ENCODE measurements at regions of chrX and their contacts with region 1.

Region 1: GRCh38 chrX:141278302-141278701 is 36.0 kb upstream of the SPANXC start:
- DNase-seq: no peak
- ATAC-seq: peak; percentile 60; the same call in 1 of the 2 replicates
- H3K4me3 ChIP-seq: no peak overlapping the region
- H3K27ac ChIP-seq: no peak overlapping the region
- H3K4me1 ChIP-seq: no peaks in the 10 kb centered on the region
- H3K27me3 ChIP-seq: no peaks in the 10 kb centered on the region
- CTCF ChIP-seq: peak; percentile 76

Region 2: DNA sequence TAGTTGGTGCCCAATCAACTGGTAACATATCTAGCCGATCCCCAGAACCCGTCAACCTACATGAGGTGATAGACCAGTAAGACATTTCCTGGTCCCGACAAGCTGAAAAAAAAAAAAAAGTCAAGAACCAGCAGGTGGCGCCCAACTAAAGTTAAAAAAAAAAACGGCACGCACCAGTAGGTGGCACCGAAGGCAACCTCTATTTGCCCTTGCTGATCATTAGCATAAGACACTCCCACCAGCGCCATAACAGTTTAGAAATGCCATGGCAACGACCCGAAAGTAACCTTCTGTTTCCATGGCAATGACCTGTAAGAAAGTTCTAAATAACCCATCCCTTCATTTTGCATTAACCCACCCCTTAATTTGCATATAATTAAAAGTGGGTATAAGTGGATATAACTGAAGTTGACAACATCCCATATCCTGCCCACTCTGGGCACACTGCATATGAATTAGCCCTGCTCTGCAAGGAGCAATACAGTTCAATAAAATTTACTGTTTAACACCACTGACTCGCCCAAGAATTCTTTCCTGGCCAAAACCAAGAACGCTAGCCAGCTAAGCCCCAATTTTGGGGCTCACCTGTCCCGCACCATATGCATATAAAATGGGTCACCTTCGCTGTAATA is 359.8 kb before region 1 on chrX:
- CTCF ChIA-PET with region 1: no interaction called
- POLR2A ChIA-PET with region 1: no interaction called
- in situ Hi-C with region 1: no loop called
- intact Hi-C with region 1: loop called (anchors 5 kb)
- DNase-seq: peak; percentile 17
- ATAC-seq: peak; percentile 72
- H3K4me3 ChIP-seq: no peak overlapping the region
- H3K27ac ChIP-seq: no peak overlapping the region
- H3K4me1 ChIP-seq: no peaks in the 10 kb centered on the region
- H3K27me3 ChIP-seq: no peaks in the 10 kb centered on the region
- CTCF ChIP-seq: peak; percentile 83

Region 3: DNA sequence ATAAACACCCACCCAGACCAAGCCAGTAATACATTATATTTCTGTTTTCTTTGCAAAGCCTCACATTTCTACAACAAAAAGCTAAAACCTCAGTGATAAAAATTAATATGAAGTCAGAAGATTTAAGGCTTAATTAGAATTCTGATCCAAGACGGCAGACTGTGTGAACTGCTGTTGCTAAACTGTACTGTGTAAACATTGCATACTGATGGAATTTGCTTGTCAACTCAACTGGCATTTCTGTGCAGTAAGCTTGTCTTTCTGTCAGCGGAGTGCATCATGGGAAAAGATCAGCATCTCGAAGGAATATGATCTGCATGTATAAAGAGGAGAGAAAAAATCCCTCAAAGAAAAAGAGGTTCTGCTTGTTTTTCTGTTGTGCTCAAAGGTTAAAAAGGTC is 345.3 kb before region 1 on chrX:
- CTCF ChIA-PET with region 1: no interaction called
- POLR2A ChIA-PET with region 1: no interaction called
- in situ Hi-C with region 1: no loop called
- intact Hi-C with region 1: no loop called
- DNase-seq: no peak
- ATAC-seq: no peak
- H3K4me3 ChIP-seq: no peak overlapping the region
- H3K27ac ChIP-seq: no peak overlapping the region
- H3K4me1 ChIP-seq: no peaks in the 10 kb centered on the region
- H3K27me3 ChIP-seq: no peaks in the 10 kb centered on the region
- CTCF ChIP-seq: no peak

Region 4: DNA sequence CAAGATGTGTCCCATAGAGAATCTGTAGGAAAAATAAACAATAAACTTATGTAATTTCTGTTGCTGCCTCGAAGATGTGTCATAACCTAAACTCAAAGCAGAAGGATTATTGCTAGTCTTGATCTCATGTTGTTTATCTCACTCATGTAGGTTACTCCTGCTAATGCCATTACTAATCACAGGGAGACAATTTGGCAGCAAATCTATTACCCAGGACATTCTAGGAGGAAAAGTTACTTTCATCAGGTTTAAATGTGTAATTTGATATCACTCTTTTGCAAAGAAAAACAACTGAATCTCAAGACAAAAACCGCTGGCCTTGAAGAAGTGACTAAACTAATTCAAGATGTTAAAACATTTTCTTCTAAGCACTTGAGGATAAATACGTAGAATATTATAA is 135.4 kb before region 1 on chrX:
- CTCF ChIA-PET with region 1: interaction called, 10 read pairs
- POLR2A ChIA-PET with region 1: no interaction called
- in situ Hi-C with region 1: no loop called
- intact Hi-C with region 1: no loop called
- DNase-seq: no peak
- ATAC-seq: no peak
- H3K4me3 ChIP-seq: no peak overlapping the region
- H3K27ac ChIP-seq: no peak overlapping the region
- H3K4me1 ChIP-seq: no peaks in the 10 kb centered on the region
- H3K27me3 ChIP-seq: no peaks in the 10 kb centered on the region
- CTCF ChIP-seq: no peak

Region 5: GRCh38 chrX:141199169-141199568 is 79.1 kb before region 1 on chrX:
- CTCF ChIA-PET with region 1: no interaction called
- POLR2A ChIA-PET with region 1: no interaction called
- in situ Hi-C with region 1: no loop called
- intact Hi-C with region 1: no loop called
- DNase-seq: no peak
- ATAC-seq: no peak
- H3K4me3 ChIP-seq: no peak overlapping the region
- H3K27ac ChIP-seq: no peak overlapping the region
- H3K4me1 ChIP-seq: no peaks in the 10 kb centered on the region
- H3K27me3 ChIP-seq: no peaks in the 10 kb centered on the region
- CTCF ChIP-seq: no peak